ENCODE measurements at regions of chr5 and their contacts with region 1.

Region 1: DNA sequence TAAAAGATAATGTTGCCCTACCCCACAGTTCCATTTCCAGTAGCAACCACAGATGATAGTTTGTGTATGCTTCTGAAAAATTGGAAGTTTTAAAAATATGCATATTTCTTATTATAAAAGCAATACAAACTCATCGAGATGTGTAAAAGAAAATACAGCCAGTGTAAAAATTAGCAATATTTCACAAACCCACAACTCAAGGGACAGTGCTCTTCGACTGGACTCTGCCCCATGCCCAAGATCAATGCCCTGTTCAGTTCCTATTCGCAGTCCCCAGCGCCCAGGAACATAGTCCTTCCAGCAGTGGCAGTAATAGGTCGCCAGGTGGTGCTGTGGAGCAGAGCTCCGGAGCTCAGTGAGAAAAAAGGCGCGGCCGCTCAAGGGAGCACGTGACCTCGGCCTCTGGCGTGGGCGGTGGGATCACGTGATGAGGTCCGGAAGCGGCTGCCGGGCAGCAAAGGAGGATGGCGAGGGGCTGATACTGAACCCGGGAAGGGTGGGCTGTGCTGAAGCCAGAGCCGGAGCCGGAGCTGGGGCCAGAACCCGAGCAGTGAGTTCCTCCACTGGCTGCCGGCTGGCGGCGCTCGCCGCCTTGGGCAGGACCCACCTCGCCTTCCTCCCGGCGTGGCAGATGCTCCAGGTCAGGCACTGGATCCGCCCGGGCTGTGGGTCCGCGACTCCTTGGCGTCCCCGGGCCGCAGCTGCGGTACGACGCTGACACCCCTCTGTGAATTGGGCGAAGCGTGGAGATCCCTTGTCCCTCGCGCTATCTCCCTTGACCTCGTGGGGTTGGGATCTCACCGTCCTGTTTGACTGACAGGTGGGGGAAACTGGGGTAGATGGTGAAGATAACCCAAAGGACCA is at the start of gene SLC36A1:
- DNase-seq: peak; percentile 88
- H3K4me3 Mint-ChIP-seq: peak within 1 kb of the TSS; percentile 98
- H3K27ac Mint-ChIP-seq: peak within 1 kb of the TSS; percentile 96
- H3K4me1 Mint-ChIP-seq: peaks cover 31% of the 10 kb centered on the region
- H3K27me3 Mint-ChIP-seq: peaks cover 25% of the 10 kb centered on the region
- total RNA-seq, gene SLC36A1: 5.8 and 7.9 TPM in 2 replicates

Region 2: DNA sequence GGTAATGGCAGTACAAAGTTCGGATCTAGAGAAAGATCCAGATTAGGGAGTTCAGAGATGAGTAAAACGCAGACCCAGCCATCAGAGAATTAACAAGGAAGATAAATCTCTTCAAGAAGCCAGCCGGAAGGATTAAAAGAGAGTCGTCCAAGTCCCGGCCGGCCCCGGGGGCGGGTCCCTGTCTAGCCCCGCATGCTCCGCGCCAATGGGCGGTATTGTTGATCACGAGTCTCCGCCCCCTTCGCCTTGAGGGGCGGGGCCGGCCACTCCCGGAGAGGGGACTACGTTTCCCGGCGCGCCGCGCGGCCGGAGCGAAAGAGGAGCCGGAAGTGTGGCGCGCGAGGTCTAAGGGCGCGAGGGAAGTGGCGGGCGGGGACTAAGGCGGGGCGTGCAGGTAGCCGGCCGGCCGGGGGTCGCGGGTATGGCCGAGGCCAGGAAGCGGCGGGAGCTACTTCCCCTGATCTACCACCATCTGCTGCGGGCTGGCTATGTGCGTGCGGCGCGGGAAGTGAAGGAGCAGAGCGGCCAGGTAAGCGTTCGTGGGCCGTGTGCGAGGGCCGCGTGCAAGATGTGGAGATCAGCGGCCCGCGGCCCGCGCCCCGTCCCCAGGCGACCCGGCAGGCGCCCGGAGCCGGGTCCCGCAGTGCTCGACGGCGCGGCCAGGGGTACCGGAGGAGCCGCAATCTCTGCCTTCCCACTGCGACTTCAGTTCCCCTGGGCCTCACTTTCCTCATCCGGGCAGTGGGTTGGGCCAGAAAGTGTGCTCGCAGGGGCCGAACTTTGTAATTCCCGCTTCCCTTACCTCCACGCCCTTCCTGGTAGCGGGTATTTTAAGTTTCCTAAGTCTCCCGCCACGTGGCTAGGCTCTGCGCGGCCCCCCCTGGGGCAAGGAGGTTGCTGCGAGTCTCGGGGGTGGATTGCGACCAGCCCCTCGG is 1089.8 kb before region 1 on chr5 and contains the start of gene TCOF1:
- intact Hi-C with region 1: loop called (anchors 5 kb)
- DNase-seq: peak; percentile 97
- H3K4me3 Mint-ChIP-seq: peak within 1 kb of the TSS; percentile 93
- H3K27ac Mint-ChIP-seq: peak within 1 kb of the TSS; percentile 91
- H3K4me1 Mint-ChIP-seq: peaks cover 39% of the 10 kb centered on the region
- H3K27me3 Mint-ChIP-seq: no peaks in the 10 kb centered on the region
- total RNA-seq, gene TCOF1: 130 and 131 TPM in 2 replicates

Region 3: GRCh38 chr5:151499501-151500035 is 52.2 kb after region 1 on chr5:
- intact Hi-C with region 1: loop called (anchors 1 kb)
- DNase-seq: no peak
- H3K4me3 Mint-ChIP-seq: no peak overlapping the region
- H3K27ac Mint-ChIP-seq: no peak overlapping the region
- H3K4me1 Mint-ChIP-seq: peaks cover 6% of the 10 kb centered on the region
- H3K27me3 Mint-ChIP-seq: no peaks in the 10 kb centered on the region

Region 4: GRCh38 chr5:151651997-151652645 is 204.7 kb after region 1 on chr5:
- intact Hi-C with region 1: loop called (anchors 1 kb)
- DNase-seq: peak; percentile 46
- H3K4me3 Mint-ChIP-seq: no peak overlapping the region
- H3K27ac Mint-ChIP-seq: no peak overlapping the region
- H3K4me1 Mint-ChIP-seq: no peaks in the 10 kb centered on the region
- H3K27me3 Mint-ChIP-seq: peaks cover 11% of the 10 kb centered on the region

Region 5: GRCh38 chr5:152142840-152143469 is 695.5 kb after region 1 on chr5:
- intact Hi-C with region 1: loop called (anchors 5 kb)
- DNase-seq: peak; percentile 21
- H3K4me3 Mint-ChIP-seq: no peak overlapping the region
- H3K27ac Mint-ChIP-seq: no peak overlapping the region
- H3K4me1 Mint-ChIP-seq: no peaks in the 10 kb centered on the region
- H3K27me3 Mint-ChIP-seq: peaks cover 2% of the 10 kb centered on the region

Measured in activated T-helper 1 cell treated with anti-CD3 and anti-CD28 coated beads, Interleukin-12 subunit alpha, Interleukin-12 subunit beta, Interleukin-2, Interleukin-4 antibody, amounts not matched to agents 30 ng/mL and 10 ng/mL and 1 ng/mL, durations not matched to agents 14 hours and 24 hours and 36 hours (primary cell).